A673 (cell line): ENCODE measurements at regions of chrX and their contacts with region 1.

Region 1: DNA sequence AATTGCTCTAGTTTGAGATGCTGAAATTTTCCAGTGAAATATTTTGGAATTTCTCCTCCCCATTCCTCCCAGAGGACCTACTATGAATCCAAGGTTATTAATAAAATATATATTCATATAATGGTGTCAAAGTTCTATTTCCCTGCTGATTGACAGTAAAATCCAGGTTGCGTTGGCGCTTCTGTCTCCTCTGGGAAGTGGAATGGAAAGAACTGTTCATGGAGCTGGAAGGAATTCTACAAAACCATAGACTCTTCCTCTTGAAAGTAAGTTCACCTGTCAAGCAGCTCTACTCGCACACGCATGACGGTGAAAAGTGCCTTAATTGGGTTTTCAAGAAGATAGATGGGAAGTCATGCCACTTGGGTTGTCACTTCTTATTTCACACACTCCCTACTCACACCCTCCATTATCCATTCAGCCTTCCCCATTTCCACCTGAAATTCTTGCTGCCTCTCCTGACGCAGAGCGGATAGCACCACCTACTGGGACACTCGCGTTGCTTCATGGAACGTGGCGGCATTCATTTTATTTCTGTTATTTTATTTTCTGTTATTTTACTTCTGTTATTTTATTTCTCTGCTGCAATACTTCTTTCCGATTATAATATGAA is 351.6 kb downstream of the NLGN4X start:
- DNase-seq: peak; percentile 82
- H3K4me3 ChIP-seq: no peak overlapping the region
- H3K27ac ChIP-seq: peak overlapping the region; percentile 45
- H3K4me1 ChIP-seq: peaks cover 25% of the 10 kb centered on the region
- H3K27me3 ChIP-seq: no peaks in the 10 kb centered on the region
- CTCF ChIP-seq: peak; percentile 86

Region 2: DNA sequence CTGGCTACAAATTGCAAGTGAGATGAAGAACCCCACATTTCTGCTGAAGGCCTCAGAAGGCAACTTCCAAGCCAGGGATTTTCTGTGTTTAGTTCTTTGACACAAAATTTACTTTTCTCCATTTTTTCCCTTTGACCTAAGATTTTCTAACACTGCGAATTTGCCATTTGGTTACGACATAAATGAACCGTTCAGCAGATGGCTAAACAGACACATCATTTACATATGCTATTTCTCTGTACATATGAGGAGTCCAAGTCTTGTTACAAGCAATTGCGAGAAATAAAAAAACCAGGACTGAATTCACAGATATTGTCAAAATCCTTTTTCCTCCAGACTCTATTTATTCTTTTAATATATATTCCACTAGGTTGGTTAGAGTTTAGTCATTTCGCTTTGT is 627.0 kb before region 1 on chrX:
- CTCF ChIA-PET with region 1: no interaction called
- POLR2A ChIA-PET with region 1: no interaction called
- intact Hi-C with region 1: no loop called
- DNase-seq: no peak
- H3K4me3 ChIP-seq: no peak overlapping the region
- H3K27ac ChIP-seq: no peak overlapping the region
- H3K4me1 ChIP-seq: peaks cover 4% of the 10 kb centered on the region
- H3K27me3 ChIP-seq: no peaks in the 10 kb centered on the region
- CTCF ChIP-seq: no peak

Region 3: DNA sequence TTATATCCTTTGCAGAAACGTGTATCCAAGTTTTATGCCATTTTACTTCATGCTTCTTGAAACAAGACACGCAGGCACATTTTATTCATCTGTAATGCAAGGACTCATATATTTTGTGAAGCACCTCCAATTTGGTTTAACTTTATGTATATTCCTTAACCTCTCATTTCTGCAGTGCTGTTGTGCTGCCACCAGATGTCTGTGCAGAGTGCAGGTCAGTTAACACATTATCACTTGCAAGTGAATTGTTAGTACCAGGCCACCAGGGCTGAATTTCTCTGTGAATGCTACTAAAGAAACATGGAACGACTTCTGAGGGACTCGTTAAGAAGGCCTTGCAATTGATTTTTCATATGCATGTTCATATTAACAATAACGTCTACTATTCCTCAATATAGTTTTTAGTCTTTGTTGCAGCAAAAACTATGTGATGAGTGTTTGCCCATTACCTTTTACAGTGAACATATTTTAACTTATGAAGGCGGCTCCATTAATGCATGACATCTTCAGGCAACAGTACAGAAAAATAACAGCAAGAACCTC is 418.7 kb before region 1 on chrX:
- CTCF ChIA-PET with region 1: no interaction called
- POLR2A ChIA-PET with region 1: no interaction called
- intact Hi-C with region 1: loop called (anchors 10 kb)
- DNase-seq: peak; percentile 66
- H3K4me3 ChIP-seq: no peak overlapping the region
- H3K27ac ChIP-seq: no peak overlapping the region
- H3K4me1 ChIP-seq: no peaks in the 10 kb centered on the region
- H3K27me3 ChIP-seq: no peaks in the 10 kb centered on the region
- CTCF ChIP-seq: peak; percentile 60

Region 4: GRCh38 chrX:6363188-6363587 is 486.1 kb after region 1 on chrX:
- CTCF ChIA-PET with region 1: no interaction called
- POLR2A ChIA-PET with region 1: no interaction called
- intact Hi-C with region 1: loop called (anchors 2 kb)
- DNase-seq: peak; percentile 68
- H3K4me3 ChIP-seq: no peak overlapping the region
- H3K27ac ChIP-seq: no peak overlapping the region
- H3K4me1 ChIP-seq: peaks cover 7% of the 10 kb centered on the region
- H3K27me3 ChIP-seq: no peaks in the 10 kb centered on the region
- CTCF ChIP-seq: peak; percentile 62